H1 (cell line): ENCODE measurements at regions of chr1 and their contacts with region 1.

Region 1: GRCh38 chr1:229092377-229093237 is 178.3 kb upstream of the RAB4A start:
- DNase-seq: no peak
- H3K4me3 ChIP-seq: peak overlapping the region in 2 of 4 experiments; percentile 0 to 41; a peak in 3 of 8 replicates
- H3K27ac ChIP-seq: peak overlapping the region; percentile 68
- H3K4me1 ChIP-seq: peaks cover 25 to 45% (median 37%) of the 10 kb centered on the region in 4 experiments
- H3K27me3 ChIP-seq: no peaks in the 10 kb centered on the region
- CTCF ChIP-seq: no peak
- EP300 ChIP-seq: no peak
- POLR2A ChIP-seq: no peak
- RAD21 ChIP-seq: no peak

Region 2: DNA sequence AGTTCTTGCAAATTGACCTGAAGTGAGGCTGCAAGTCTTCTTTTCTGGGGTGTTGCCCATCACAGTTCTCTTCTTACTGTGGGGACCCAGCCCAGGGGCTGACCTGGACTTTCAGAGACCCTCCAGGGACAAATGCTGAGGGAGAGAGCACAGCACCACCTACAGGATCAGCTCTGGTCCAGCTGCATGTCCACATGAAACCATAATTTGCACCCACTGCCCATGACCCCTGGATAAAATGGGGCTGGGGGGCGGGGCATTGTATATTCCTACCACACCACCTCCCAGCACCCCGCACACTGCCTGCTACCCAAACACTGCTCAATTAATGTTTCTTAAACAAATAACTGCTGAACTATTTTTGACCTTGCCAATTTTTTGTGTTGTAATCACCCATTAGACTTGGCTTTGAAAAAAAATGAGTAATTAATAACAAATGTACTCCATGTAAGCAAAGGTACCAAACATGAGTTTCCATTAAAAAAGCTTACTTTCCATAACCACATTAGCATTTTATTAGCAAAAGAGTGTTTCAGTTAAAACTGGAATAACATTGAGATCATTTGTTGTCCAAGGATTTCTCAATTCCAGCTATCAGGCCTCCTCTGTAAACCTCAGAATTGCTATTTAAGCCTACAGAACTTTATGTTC is 10.3 kb after region 1 on chr1:
- CTCF ChIA-PET with region 1: interaction called, 26 read pairs
- POLR2A ChIA-PET with region 1: interaction called, 3 read pairs
- DNase-seq: no peak
- H3K4me3 ChIP-seq: no peak overlapping the region
- H3K27ac ChIP-seq: no peak overlapping the region
- H3K4me1 ChIP-seq: peaks cover 0 to 4% (median 2%) of the 10 kb centered on the region in 4 experiments; a peak in 2 of 7 replicates
- H3K27me3 ChIP-seq: 0 out of 7 replicates have a peak, but pooled peaks cover 0 to 2% (median 0%) of the 10 kb centered on the region in 4 experiments
- CTCF ChIP-seq: peak; percentile 49 to 70 (median 66)
- EP300 ChIP-seq: no peak
- POLR2A ChIP-seq: no peak
- RAD21 ChIP-seq: peak; percentile 79 to 84

Region 3: GRCh38 chr1:229114921-229115365 is 22.3 kb after region 1 on chr1:
- CTCF ChIA-PET with region 1: no interaction called
- POLR2A ChIA-PET with region 1: no interaction called
- DNase-seq: no peak
- H3K4me3 ChIP-seq: no peak overlapping the region
- H3K27ac ChIP-seq: no peak overlapping the region
- H3K4me1 ChIP-seq: peaks cover 0 to 6% (median 4%) of the 10 kb centered on the region in 4 experiments; a peak in 3 of 7 replicates
- H3K27me3 ChIP-seq: peaks cover 0 to 11% (median 2%) of the 10 kb centered on the region in 4 experiments; a peak in 4 of 7 replicates
- CTCF ChIP-seq: no peak
- EP300 ChIP-seq: no peak
- POLR2A ChIP-seq: no peak
- RAD21 ChIP-seq: peak; percentile 3 to 24; a peak in 1 of 4 replicates